ENCODE measurements at regions of chr11 and their contacts with region 1.

Region 1: DNA sequence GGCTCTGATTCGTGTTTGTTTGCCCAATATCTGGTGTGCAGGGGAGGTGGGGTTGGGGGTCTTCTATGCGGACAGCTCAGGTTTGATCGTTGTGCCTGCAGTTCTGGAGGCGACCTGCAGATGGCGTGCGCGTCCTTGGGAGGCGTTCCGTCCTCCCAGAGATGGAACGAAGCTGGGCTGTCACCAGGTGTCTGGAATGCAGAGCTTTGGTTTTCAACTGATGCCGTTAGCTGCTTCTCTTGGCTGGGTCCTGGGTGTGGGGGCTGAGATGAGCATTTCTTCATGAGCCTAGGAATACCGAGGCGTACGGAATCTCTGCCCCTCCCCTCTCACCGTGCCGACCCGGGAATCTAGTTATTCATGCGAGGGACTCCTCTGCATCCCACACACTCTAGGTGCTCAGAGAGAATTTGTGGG is 98.6 kb downstream of the CEP164 start:
- DNase-seq: peak; percentile 50 to 74 (median 61)
- ATAC-seq: peak; percentile 48
- H3K4me3 ChIP-seq: no peak overlapping the region
- H3K4me3 Mint-ChIP-seq: no peak overlapping the region
- H3K27ac ChIP-seq: no peak overlapping the region
- H3K27ac Mint-ChIP-seq: no peak overlapping the region
- H3K4me1 ChIP-seq: peaks cover 8% of the 10 kb centered on the region
- H3K4me1 Mint-ChIP-seq: peaks cover 5% of the 10 kb centered on the region
- H3K27me3 ChIP-seq: no peaks in the 10 kb centered on the region
- H3K27me3 Mint-ChIP-seq: no peaks in the 10 kb centered on the region
- CTCF ChIP-seq: peak; percentile 92

Region 2: DNA sequence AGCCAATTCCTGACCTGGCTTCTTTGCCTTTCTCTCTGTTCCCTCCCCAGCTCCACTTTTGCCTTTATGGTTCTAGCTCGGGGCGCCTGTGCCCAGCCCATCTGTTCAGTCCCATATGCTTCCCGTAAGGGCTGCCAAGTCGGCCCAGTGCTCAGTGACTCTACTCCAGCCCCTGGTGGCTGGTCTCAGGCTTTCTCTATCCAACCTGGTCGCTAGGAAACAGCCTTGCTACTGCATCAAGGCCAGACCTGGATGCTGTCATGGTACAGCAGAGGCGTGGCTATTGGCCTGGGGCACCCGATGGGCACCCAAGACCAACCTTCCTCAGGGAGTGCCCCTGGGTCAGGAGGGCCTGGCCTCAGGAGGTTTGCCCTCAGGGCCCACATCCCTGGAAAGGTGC is 192.7 kb after region 1 on chr11:
- CTCF ChIA-PET with region 1: no interaction called
- POLR2A ChIA-PET with region 1: no interaction called
- intact Hi-C with region 1: no loop called
- DNase-seq: no peak
- ATAC-seq: no peak
- H3K4me3 ChIP-seq: no peak overlapping the region
- H3K4me3 Mint-ChIP-seq: no peak overlapping the region
- H3K27ac ChIP-seq: no peak overlapping the region
- H3K27ac Mint-ChIP-seq: no peak overlapping the region
- H3K4me1 ChIP-seq: no peaks in the 10 kb centered on the region
- H3K4me1 Mint-ChIP-seq: no peaks in the 10 kb centered on the region
- H3K27me3 ChIP-seq: peaks cover 0 to 5% of the 10 kb centered on the region in 2 experiments
- H3K27me3 Mint-ChIP-seq: peaks cover 17% of the 10 kb centered on the region
- CTCF ChIP-seq: no peak

Region 3: GRCh38 chr11:117817368-117818040 is 391.2 kb after region 1 on chr11:
- CTCF ChIA-PET with region 1: interaction called, 3 read pairs
- POLR2A ChIA-PET with region 1: no interaction called
- intact Hi-C with region 1: loop called (anchors 2 to 10 kb)
- DNase-seq: peak; percentile 70 to 92 (median 84)
- ATAC-seq: peak; percentile 16
- H3K4me3 ChIP-seq: no peak overlapping the region
- H3K4me3 Mint-ChIP-seq: peak overlapping the region; percentile 38
- H3K27ac ChIP-seq: no peak overlapping the region
- H3K27ac Mint-ChIP-seq: peak overlapping the region; percentile 87
- H3K4me1 ChIP-seq: peaks cover 67% of the 10 kb centered on the region
- H3K4me1 Mint-ChIP-seq: peaks cover 50% of the 10 kb centered on the region
- H3K27me3 ChIP-seq: no peaks in the 10 kb centered on the region
- H3K27me3 Mint-ChIP-seq: no peaks in the 10 kb centered on the region
- CTCF ChIP-seq: peak; percentile 97

Region 4: DNA sequence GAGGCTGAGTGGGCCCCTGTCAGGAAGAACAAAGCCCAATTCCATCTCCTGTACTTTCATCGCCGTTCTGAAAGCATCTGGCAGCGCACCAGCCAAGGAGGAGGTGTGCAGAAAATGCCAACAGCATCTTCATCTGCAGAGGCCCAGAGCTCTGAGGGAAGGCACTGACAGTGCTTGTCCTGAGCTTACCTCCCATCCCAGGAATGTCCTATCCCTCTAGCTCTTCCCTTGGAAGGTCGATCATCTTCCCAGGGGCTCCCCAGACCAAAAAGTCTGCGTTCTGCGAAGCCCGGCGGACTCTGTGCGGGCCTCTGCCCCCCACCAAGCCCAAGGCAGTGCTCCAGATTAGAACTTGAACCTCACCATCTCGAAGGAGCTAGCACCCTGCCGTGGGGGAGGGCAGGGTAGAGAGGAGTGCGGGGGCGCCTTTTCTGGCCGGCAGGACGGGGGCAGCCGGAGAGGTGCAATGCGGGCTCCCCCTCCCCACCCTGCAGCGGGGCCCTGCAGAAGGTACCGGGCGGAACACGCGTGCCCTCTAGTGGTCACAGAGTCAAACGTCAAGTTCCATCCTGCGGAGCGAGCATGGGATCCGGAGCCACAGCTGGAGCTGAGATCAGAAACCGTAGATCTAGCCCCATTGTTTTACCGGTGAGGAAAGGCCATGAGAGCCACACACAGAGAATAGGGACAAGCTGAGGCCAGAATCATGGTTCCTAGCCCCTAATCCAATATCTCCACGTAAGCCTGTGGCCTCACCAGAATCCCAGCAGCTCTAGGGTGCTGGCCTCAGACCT is 745.2 kb after region 1 on chr11:
- CTCF ChIA-PET with region 1: interaction called, 4 read pairs
- POLR2A ChIA-PET with region 1: no interaction called
- intact Hi-C with region 1: loop called in 1 of 2 experiments (anchors 5 kb)
- DNase-seq: peak; percentile 53 to 88 (median 66)
- ATAC-seq: peak; percentile 99
- H3K4me3 ChIP-seq: no peak overlapping the region
- H3K4me3 Mint-ChIP-seq: no peak overlapping the region
- H3K27ac ChIP-seq: no peak overlapping the region
- H3K27ac Mint-ChIP-seq: no peak overlapping the region
- H3K4me1 ChIP-seq: peaks cover 8% of the 10 kb centered on the region
- H3K4me1 Mint-ChIP-seq: peaks cover 5% of the 10 kb centered on the region
- H3K27me3 ChIP-seq: peaks cover 0 to 2% of the 10 kb centered on the region in 2 experiments
- H3K27me3 Mint-ChIP-seq: peaks cover 11% of the 10 kb centered on the region
- CTCF ChIP-seq: peak; percentile 94

Measured in CD4-positive, alpha-beta T cell (primary cell).